ENCODE measurements at regions of chr3 and their contacts with region 1.

Region 1: DNA sequence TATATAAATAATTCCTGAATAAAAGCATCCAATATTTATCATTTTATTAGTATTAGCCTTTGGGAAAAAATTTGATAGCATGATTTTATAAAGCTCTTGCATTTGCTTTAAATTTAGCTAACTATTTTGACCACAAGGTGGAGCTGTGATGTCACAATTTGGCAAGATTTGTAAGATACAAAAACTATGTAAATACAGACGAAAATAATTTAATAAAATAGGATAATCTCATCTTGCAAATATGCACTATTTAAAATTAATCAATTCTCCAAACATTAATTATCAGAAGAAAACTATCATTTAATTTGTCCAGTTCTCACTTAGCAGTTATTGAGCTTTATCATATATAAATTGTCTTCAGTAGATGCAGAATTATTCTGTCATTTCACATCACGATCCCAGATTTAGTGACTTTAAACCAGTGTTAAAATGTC is 95.4 kb downstream of the PLOD2 start:
- DNase-seq: peak; percentile 43
- ATAC-seq: no peak
- H3K4me3 ChIP-seq: no peak overlapping the region
- H3K27ac ChIP-seq: no peak overlapping the region
- H3K4me1 ChIP-seq: no peaks in the 10 kb centered on the region
- H3K27me3 ChIP-seq: no peaks in the 10 kb centered on the region
- CTCF ChIP-seq: peak; percentile 37; the same call in 1 of the 2 replicates

Region 2: GRCh38 chr3:146160964-146161662 is 95.5 kb after region 1 on chr3 and contains the start of gene PLOD2:
- CTCF ChIA-PET with region 1: interaction called, 7 read pairs
- POLR2A ChIA-PET with region 1: interaction called, 5 read pairs
- in situ Hi-C with region 1: no loop called
- intact Hi-C with region 1: loop called (anchors 5 kb)
- DNase-seq: no peak
- ATAC-seq: peak; percentile 82
- H3K4me3 ChIP-seq: peak within 1 kb of the TSS; percentile 77 to 93
- H3K27ac ChIP-seq: peak within 1 kb of the TSS; percentile 99
- H3K4me1 ChIP-seq: peaks cover 66% of the 10 kb centered on the region
- H3K27me3 ChIP-seq: no peaks in the 10 kb centered on the region
- CTCF ChIP-seq: no peak
- total RNA-seq, gene PLOD2: 158 TPM

Region 3: DNA sequence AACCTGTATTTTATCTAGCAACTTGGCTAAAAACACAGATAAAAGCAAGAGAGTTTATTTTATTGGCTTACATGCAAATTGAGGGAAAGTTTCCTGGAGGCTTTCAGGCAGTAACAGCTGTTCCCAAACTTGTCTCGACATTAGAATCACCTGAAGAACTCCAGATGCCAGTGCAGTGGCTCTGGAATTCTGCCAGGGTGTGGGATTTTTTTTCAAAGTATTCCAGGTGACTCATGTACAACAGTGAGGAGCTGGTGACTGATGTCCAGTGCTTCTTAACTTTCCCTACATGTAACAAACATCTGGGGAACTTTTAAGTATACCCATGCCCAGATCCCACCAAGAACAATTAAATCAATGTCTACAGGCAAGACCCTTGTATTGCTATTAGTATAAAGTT is 119.0 kb after region 1 on chr3:
- CTCF ChIA-PET with region 1: interaction called, 20 read pairs
- POLR2A ChIA-PET with region 1: interaction called, 3 read pairs
- in situ Hi-C with region 1: no loop called
- intact Hi-C with region 1: loop called (anchors 1 kb)
- DNase-seq: no peak
- ATAC-seq: no peak
- H3K4me3 ChIP-seq: no peak overlapping the region
- H3K27ac ChIP-seq: peak overlapping the region; percentile 39; the same call in 1 of the 2 replicates
- H3K4me1 ChIP-seq: peaks cover 13% of the 10 kb centered on the region
- H3K27me3 ChIP-seq: no peaks in the 10 kb centered on the region
- CTCF ChIP-seq: no peak

Region 4: DNA sequence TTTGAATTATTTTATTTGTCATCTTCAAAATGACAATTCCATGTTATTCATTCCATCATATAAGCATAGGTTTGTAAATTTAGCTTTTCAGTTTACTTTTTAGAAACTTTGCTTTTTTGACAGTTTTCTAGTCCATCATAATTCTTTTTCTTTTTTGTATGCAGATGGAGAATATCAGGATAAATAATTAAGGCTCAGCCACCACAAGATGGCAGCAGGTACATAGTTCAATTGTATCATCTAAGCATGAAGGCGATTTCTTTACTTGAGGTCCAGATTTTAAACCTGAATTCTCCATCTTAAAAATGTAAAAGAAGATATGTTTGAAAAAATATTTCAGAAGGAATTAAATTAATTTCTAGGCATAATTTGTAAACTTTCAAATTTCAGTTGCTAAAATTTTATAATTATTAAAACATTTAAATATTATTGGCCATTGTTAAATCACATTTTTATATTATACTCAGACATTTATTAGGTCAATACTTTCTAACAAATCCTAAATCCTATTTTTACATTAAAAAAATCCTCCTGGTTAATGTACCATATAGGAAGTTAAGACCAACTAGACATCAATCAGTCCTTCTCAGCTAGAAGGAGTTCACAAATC is 524.4 kb after region 1 on chr3:
- CTCF ChIA-PET with region 1: no interaction called
- POLR2A ChIA-PET with region 1: no interaction called
- in situ Hi-C with region 1: no loop called
- intact Hi-C with region 1: loop called (anchors 10 kb)
- DNase-seq: peak; percentile 20
- ATAC-seq: peak; percentile 70; the same call in 1 of the 2 replicates
- H3K4me3 ChIP-seq: no peak overlapping the region
- H3K27ac ChIP-seq: no peak overlapping the region
- H3K4me1 ChIP-seq: no peaks in the 10 kb centered on the region
- H3K27me3 ChIP-seq: no peaks in the 10 kb centered on the region; the same call in 1 of the 2 replicates
- CTCF ChIP-seq: peak; percentile 77; the same call in 1 of the 2 replicates

Region 5: GRCh38 chr3:146640955-146641867 is 575.6 kb after region 1 on chr3:
- CTCF ChIA-PET with region 1: no interaction called
- POLR2A ChIA-PET with region 1: no interaction called
- in situ Hi-C with region 1: no loop called
- intact Hi-C with region 1: no loop called
- DNase-seq: no peak
- ATAC-seq: peak; percentile 91
- H3K4me3 ChIP-seq: no peak overlapping the region
- H3K27ac ChIP-seq: no peak overlapping the region
- H3K4me1 ChIP-seq: no peaks in the 10 kb centered on the region
- H3K27me3 ChIP-seq: no peaks in the 10 kb centered on the region; the same call in 1 of the 2 replicates
- CTCF ChIP-seq: peak; percentile 81; the same call in 1 of the 2 replicates

Measured in Panc1 (cell line).